CD4-positive, alpha-beta T cell (primary cell): ENCODE measurements at regions of chr3 and their contacts with region 1.

Region 1: GRCh38 chr3:112568642-112569041 is 6.8 kb downstream of the SLC35A5 start:
- DNase-seq: no peak
- ATAC-seq: no peak
- H3K4me3 ChIP-seq: no peak overlapping the region
- H3K4me3 Mint-ChIP-seq: no peak overlapping the region
- H3K27ac ChIP-seq: no peak overlapping the region
- H3K27ac Mint-ChIP-seq: no peak overlapping the region
- H3K4me1 ChIP-seq: no peaks in the 10 kb centered on the region
- H3K4me1 Mint-ChIP-seq: peaks cover 36% of the 10 kb centered on the region
- H3K27me3 ChIP-seq: no peaks in the 10 kb centered on the region
- H3K27me3 Mint-ChIP-seq: no peaks in the 10 kb centered on the region
- CTCF ChIP-seq: no peak

Region 2: GRCh38 chr3:113696658-113697499 is 1128.2 kb after region 1 on chr3:
- CTCF ChIA-PET with region 1: no interaction called
- POLR2A ChIA-PET with region 1: no interaction called
- intact Hi-C with region 1: loop called in 1 of 2 experiments (anchors 5 kb)
- DNase-seq: peak; percentile 96 to 100 (median 98)
- ATAC-seq: peak; percentile 87
- H3K4me3 ChIP-seq: peak overlapping the region; percentile 78
- H3K4me3 Mint-ChIP-seq: no peak overlapping the region
- H3K27ac ChIP-seq: peak overlapping the region; percentile 87
- H3K27ac Mint-ChIP-seq: no peak overlapping the region
- H3K4me1 ChIP-seq: peaks cover 23% of the 10 kb centered on the region
- H3K4me1 Mint-ChIP-seq: peaks cover 23% of the 10 kb centered on the region
- H3K27me3 ChIP-seq: no peaks in the 10 kb centered on the region
- H3K27me3 Mint-ChIP-seq: no peaks in the 10 kb centered on the region
- CTCF ChIP-seq: no peak